Cardiac septum (tissue), 1 donor: ENCODE measurements at regions of chr10 and their contacts with region 1.

Region 1: GRCh38 chr10:76624470-76624869 is 1013.1 kb downstream of the KCNMA1 start:
- DNase-seq: no peak

Region 2: GRCh38 chr10:76576276-76576962 is 48.1 kb before region 1 on chr10:
- intact Hi-C with region 1: loop called (anchors 5 kb)
- DNase-seq: no peak

Region 3: DNA sequence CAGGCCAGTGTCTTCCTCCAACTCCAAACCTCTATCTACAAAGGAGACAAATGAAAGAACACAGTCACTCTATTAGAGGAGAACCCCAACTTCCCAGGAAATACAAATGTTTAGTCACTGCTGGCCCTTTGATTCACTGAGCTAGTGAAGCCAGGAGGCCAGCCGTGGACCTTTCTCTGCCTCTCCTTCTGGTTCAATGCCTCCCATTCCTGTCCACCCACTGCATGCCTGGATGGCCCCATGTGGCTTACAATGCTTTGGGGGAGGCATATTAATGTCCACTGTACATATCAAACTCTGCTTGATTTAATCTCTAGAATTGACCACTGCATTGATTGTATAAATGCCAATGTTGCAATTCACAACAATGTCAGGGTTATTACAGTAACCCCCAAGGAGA is 325.9 kb after region 1 on chr10:
- intact Hi-C with region 1: no loop called
- DNase-seq: no peak